Left ventricle myocardium inferior (tissue), 1 donor: ENCODE measurements at regions of chr16 and their contacts with region 1.

Region 1: DNA sequence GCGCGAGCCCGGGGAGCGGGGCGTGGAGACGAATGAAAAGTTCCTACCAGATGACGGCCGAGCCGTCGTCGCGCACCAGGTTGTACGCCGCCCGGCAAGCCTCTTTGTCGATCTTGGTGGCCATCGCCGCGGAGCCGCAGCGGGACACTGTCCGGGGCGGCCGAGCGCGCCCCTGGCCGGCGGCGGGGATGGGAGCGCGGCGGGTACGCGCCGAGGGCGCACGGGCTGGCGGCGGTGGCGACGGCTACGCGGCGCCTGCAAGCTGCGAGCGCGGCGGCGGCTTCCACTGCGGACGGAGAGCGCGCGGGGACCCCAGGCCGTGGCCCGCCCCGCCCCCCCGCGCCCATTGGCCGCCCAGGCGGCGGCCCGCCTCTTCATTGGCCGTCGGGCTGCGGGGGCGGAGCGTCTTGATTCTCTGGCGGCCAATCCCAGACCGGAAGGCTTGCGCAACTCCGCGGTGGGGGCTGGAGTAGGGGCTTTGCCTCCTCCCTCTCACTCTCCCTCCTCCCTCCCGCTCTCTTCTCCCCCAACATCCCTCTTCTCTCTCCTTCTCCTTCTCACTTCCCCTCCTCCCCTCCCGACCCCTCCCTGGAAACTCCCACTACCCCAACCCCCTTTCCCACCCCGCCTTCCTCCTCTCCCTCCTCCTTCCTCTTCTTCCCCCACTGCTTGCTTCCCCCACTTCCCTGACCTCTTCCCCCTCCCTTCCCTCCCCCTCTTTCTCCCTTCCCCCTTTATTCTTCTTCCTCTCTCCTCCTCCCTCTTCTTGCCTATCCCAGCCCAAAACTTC is at the start of gene COTL1:
- DNase-seq: peak; percentile 98
- H3K4me3 ChIP-seq: peak within 1 kb of the TSS; percentile 86
- H3K27ac ChIP-seq: peak within 1 kb of the TSS; percentile 77
- H3K4me1 ChIP-seq: peaks cover 32% of the 10 kb centered on the region
- H3K27me3 ChIP-seq: peaks cover 13% of the 10 kb centered on the region
- CTCF ChIP-seq: no peak
- total RNA-seq, gene COTL1: 13.3 TPM

Region 2: DNA sequence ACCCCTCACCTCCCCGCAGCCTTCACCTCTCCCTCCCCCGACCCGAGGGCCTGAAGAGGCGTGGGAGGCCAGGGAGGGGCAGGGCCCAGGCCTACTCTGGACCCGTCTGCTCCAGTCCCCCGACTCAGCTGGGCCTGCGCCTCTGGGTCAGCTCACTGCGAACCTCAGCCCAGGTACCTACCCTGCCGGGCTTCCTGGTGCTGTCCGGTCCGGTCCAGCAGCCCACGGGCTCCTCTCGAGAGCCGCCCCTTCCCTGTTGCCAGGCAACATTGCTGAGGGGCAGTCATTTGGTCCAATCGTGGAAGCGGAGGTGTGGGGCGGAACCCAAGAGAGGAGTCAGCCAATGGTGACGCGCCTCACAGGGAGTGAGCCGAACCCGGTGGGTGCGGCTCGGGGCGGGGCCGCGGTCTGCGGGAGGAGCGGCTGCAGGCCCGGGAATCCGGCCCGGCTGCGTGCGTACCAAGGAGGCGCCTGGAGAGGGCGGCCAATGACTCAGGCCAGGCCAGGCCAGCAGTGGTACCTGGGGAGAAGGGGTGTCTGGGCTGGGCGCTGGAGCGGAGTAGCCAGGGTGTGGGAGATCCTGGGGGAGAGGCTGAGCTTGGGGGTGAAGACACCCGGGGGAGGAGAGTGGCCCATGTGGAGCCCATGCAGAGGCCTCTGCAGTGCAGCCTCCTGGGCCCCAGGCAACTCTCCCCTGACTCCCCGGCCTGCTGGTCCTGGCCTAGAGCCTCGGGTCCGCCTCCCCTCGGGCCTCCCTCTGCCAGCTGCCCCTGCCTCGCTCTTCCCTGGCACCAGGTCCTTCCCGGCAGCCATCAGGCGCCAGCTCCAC is 113.4 kb before region 1 on chr16 and contains the start of gene MEAK7:
- intact Hi-C with region 1: loop called (anchors 5 kb)
- DNase-seq: peak; percentile 99
- H3K4me3 ChIP-seq: peak within 1 kb of the TSS; percentile 90
- H3K27ac ChIP-seq: peak within 1 kb of the TSS; percentile 89
- H3K4me1 ChIP-seq: peaks cover 30% of the 10 kb centered on the region
- H3K27me3 ChIP-seq: no peaks in the 10 kb centered on the region
- CTCF ChIP-seq: no peak
- total RNA-seq, gene MEAK7: 5.3 TPM